A673 (cell line): ENCODE measurements at regions of chr12 and their contacts with region 1.

Region 1: GRCh38 chr12:115946867-115947696 is 330.4 kb downstream of the MED13L start:
- DNase-seq: peak; percentile 23
- H3K4me3 ChIP-seq: no peak overlapping the region
- H3K27ac ChIP-seq: no peak overlapping the region
- H3K4me1 ChIP-seq: no peaks in the 10 kb centered on the region
- H3K27me3 ChIP-seq: no peaks in the 10 kb centered on the region
- CTCF ChIP-seq: peak; percentile 69

Region 2: GRCh38 chr12:115934046-115934445 is 13.0 kb before region 1 on chr12:
- CTCF ChIA-PET with region 1: interaction called, 14 read pairs
- POLR2A ChIA-PET with region 1: no interaction called
- intact Hi-C with region 1: no loop called
- DNase-seq: no peak
- H3K4me3 ChIP-seq: no peak overlapping the region
- H3K27ac ChIP-seq: no peak overlapping the region
- H3K4me1 ChIP-seq: no peaks in the 10 kb centered on the region
- H3K27me3 ChIP-seq: no peaks in the 10 kb centered on the region
- CTCF ChIP-seq: no peak

Region 3: GRCh38 chr12:116515684-116516083 is 568.6 kb after region 1 on chr12:
- CTCF ChIA-PET with region 1: no interaction called
- POLR2A ChIA-PET with region 1: interaction called, 14 read pairs
- intact Hi-C with region 1: no loop called
- DNase-seq: no peak
- H3K4me3 ChIP-seq: no peak overlapping the region
- H3K27ac ChIP-seq: no peak overlapping the region
- H3K4me1 ChIP-seq: peaks cover 4% of the 10 kb centered on the region
- H3K27me3 ChIP-seq: no peaks in the 10 kb centered on the region
- CTCF ChIP-seq: no peak